ENCODE measurements at regions of chr1 and their contacts with region 1.

Region 1: DNA sequence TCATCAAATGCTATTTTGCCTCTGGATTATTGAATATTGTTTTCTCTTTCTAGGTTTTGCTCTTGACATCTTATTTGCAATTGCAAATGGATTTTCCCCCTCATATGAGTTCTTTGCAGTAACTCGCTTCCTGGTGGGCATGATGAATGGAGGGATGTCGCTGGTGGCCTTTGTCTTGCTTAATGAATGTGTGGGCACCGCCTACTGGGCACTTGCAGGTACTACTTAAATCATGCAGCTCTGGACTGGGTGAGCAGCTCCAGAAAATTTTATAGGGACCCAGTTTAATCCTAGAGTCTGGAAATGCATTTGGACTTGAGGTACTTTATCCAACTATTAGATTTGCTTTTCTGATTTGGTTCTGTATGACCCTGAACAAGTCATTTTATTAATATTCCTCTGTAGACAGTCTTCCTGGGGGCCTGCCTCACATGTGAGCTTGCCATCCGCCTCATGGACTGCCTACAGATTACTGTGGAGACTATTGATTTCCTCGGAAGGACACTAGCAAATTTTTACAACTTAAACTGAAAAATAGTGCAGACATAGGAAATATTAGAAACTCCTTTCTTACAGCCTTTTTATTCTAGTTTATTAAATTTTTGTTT is 44.5 kb downstream of the SLC22A15 start:
- DNase-seq: no peak
- ATAC-seq: peak; percentile 45
- H3K4me3 Mint-ChIP-seq: no peak overlapping the region
- H3K27ac Mint-ChIP-seq: no peak overlapping the region
- H3K4me1 Mint-ChIP-seq: no peaks in the 10 kb centered on the region
- H3K27me3 Mint-ChIP-seq: no peaks in the 10 kb centered on the region
- CTCF ChIP-seq: no peak

Region 2: DNA sequence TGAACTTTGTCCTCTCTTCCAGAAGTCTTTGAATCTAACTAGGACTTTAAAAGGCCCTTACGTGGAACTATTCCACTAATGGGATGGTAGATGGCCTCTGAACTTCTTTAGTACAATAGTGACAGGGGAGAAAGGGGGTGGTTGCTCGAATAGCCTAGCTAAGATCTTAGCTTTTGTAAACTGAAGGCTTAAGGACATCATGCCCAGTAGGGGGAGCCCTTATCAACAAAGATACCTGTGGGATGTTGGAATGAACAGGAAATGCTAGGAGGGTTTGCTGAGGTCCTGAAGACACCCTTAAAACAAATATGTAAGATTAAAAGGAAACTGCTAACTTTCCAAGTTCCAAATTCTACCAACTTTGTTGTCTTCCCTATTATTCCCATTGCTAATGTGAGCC is 213.0 kb before region 1 on chr1:
- CTCF ChIA-PET with region 1: interaction called, 11 read pairs
- POLR2A ChIA-PET with region 1: no interaction called
- intact Hi-C with region 1: loop called (anchors 1 kb)
- DNase-seq: no peak
- ATAC-seq: peak; percentile 28
- H3K4me3 Mint-ChIP-seq: no peak overlapping the region
- H3K27ac Mint-ChIP-seq: no peak overlapping the region
- H3K4me1 Mint-ChIP-seq: no peaks in the 10 kb centered on the region
- H3K27me3 Mint-ChIP-seq: peaks cover 9% of the 10 kb centered on the region
- CTCF ChIP-seq: no peak

Region 3: DNA sequence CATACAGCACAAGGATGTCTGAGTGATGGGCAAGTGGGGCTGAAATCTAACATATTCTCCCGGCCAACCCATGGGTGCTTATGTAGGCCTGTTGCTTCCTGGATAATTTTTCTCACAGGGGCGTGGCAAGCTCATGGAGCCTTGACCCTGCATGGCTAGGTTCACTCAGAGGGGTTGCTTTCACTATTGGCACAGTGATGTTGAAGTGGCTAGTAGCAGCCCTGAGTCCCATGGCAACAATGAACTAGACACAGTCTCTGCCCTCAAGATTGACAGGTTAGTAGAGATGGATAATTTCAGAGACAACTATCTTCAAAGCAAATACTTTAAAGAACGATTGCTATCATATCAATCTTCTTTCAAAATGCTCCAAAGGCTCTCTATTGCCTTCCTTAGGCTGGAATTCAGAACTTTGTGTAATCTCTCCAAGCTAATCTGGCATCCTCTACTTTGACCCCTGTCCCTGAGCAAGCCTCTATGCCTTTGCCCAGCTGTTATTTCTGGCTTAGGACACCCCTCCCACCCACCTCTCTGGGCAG is 84.0 kb after region 1 on chr1:
- CTCF ChIA-PET with region 1: no interaction called
- POLR2A ChIA-PET with region 1: no interaction called
- intact Hi-C with region 1: no loop called
- DNase-seq: no peak
- ATAC-seq: no peak
- H3K4me3 Mint-ChIP-seq: no peak overlapping the region
- H3K27ac Mint-ChIP-seq: no peak overlapping the region
- H3K4me1 Mint-ChIP-seq: no peaks in the 10 kb centered on the region
- H3K27me3 Mint-ChIP-seq: no peaks in the 10 kb centered on the region
- CTCF ChIP-seq: no peak

Measured in activated B cell treated with CpG ODN at 0.5 μM for 24 hours (primary cell).